ENCODE measurements at regions of chr17 and their contacts with region 1.

Region 1: DNA sequence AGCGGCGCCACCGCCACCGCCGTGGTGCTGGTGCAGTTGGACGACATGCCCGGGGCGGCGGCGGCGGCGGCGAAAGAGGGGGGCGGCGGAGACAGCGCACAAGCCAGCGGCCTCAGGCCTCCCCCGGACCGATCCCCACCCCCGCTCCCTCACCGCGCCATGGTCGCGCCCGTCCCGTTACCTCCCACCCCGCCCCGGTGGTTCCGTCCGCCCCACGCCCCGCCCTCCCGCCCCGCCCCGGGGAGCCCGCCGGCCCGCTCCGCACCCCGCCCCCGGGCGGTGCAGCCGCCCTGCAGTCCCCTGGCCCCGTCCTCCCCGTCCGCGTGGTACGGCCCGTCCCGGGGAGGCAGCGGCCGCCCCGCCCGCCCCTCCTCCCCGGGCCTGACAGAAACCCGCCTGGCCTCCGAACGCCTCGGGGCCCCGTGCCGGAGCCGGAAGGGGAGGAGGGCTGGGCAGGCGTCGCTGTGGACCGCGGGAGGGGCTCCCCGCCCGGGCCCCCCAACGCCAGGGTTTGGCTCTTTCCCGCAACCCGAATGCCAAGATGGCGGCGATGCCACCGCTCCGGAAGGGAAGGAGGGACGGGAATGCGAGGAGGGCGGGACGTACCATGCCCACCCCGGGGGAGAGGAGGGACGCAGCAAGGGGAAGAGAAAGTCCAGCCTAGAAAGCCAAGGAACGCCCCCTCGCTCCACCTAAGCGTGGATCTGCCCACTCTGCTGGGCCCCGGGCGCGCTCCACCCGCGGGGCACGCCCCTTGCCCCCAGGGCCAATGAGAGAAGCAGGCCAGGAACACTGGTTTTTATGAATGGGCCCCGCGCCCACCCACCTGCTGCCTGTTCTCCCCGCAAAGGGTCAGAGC is at the start of gene PIP4K2B:
- DNase-seq: peak; percentile 89 to 95
- H3K4me3 ChIP-seq: peak within 1 kb of the TSS; percentile 92
- H3K27ac ChIP-seq: peak within 1 kb of the TSS; percentile 96
- H3K4me1 ChIP-seq: peaks cover 23% of the 10 kb centered on the region
- H3K27me3 ChIP-seq: no peaks in the 10 kb centered on the region
- CTCF ChIP-seq: no peak
- total RNA-seq, gene PIP4K2B: 40.6 and 47.4 TPM in 2 replicates

Region 2: GRCh38 chr17:38485146-38485468 is 314.5 kb before region 1 on chr17:
- CTCF ChIA-PET with region 1: no interaction called
- POLR2A ChIA-PET with region 1: no interaction called
- intact Hi-C with region 1: no loop called
- DNase-seq: no peak
- H3K4me3 ChIP-seq: no peak overlapping the region
- H3K27ac ChIP-seq: no peak overlapping the region
- H3K4me1 ChIP-seq: no peaks in the 10 kb centered on the region
- H3K27me3 ChIP-seq: no peaks in the 10 kb centered on the region
- CTCF ChIP-seq: no peak; the same call in 1 of the 2 replicates

Region 3: DNA sequence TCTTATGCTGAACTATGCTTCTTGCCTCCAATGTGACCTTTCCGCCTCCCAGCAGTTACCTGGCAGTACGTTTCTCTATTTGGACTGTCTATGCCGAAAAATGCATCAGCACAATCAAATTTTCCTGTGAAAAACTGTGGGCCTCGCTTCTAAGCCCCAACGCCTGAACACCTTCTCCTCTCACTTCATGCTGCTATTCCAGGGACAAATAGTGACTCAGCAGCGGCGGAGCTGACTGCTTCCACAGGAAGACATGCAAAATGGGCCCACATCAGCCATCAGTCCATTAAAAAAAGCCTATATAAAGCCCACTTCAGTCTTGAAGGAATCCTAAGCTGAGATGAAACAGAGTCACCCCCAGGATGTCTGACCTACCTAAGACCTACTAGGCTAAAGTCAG is 10.2 kb after region 1 on chr17:
- CTCF ChIA-PET with region 1: no interaction called
- POLR2A ChIA-PET with region 1: interaction called, 13 read pairs
- intact Hi-C with region 1: no loop called
- DNase-seq: no peak
- H3K4me3 ChIP-seq: no peak overlapping the region
- H3K27ac ChIP-seq: no peak overlapping the region
- H3K4me1 ChIP-seq: no peaks in the 10 kb centered on the region
- H3K27me3 ChIP-seq: no peaks in the 10 kb centered on the region
- CTCF ChIP-seq: no peak

Region 4: GRCh38 chr17:38824899-38825761 is 25.5 kb after region 1 on chr17 and contains the start of gene CWC25:
- CTCF ChIA-PET with region 1: no interaction called
- POLR2A ChIA-PET with region 1: no interaction called
- intact Hi-C with region 1: no loop called
- DNase-seq: peak; percentile 81 to 94
- H3K4me3 ChIP-seq: peak within 1 kb of the TSS; percentile 82
- H3K27ac ChIP-seq: peak within 1 kb of the TSS; percentile 97
- H3K4me1 ChIP-seq: peaks cover 16% of the 10 kb centered on the region
- H3K27me3 ChIP-seq: no peaks in the 10 kb centered on the region
- CTCF ChIP-seq: no peak
- total RNA-seq, gene CWC25: 13.7 and 13.9 TPM in 2 replicates

Region 5: GRCh38 chr17:38967290-38967738 is 167.7 kb after region 1 on chr17 and contains the start of gene FBXO47:
- CTCF ChIA-PET with region 1: no interaction called
- POLR2A ChIA-PET with region 1: no interaction called
- intact Hi-C with region 1: no loop called
- DNase-seq: peak; percentile 75 to 89
- H3K4me3 ChIP-seq: peak within 1 kb of the TSS; percentile 47; the same call in 1 of the 2 replicates
- H3K27ac ChIP-seq: no peak within 1 kb of the TSS
- H3K4me1 ChIP-seq: no peaks in the 10 kb centered on the region
- H3K27me3 ChIP-seq: no peaks in the 10 kb centered on the region
- CTCF ChIP-seq: no peak
- total RNA-seq, gene FBXO47: not detected in 2 replicates

Measured in PC-9 (cell line).